Dendritic cell treated with granulocyte-macrophage colony-stimulating factor and Interleukin-4, amounts not matched to agents 40 ng/mL and 50 ng/mL, for 4 days (primary cell): ENCODE measurements at regions of chr1 and their contacts with region 1.

Region 1: GRCh38 chr1:43073490-43074230 is 98.4 kb downstream of the EBNA1BP2 start:
- H3K4me3 Mint-ChIP-seq: no peak overlapping the region
- H3K27ac Mint-ChIP-seq: no peak overlapping the region
- H3K4me1 Mint-ChIP-seq: peaks cover 16% of the 10 kb centered on the region
- H3K27me3 Mint-ChIP-seq: peaks cover 16% of the 10 kb centered on the region

Region 2: DNA sequence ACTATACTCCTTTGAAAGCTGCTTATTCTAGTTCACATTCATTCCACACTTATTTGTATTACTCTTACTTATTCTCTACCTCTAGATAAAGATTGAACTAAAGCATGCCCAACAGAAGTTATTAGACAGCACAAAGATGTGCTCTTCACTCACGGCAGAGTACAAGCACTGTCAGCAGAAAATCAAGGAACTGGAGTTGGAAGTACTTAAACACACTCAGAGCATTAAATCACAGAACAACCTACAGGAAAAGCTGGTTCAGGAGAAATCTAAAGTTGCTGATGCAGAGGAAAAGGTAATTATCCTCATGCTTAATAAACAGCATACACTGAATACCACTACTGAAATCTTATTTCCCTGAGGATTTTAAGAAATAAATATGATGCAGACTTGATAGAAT is 496.7 kb before region 1 on chr1:
- intact Hi-C with region 1: loop called (anchors 5 kb)
- H3K4me3 Mint-ChIP-seq: no peak overlapping the region
- H3K27ac Mint-ChIP-seq: no peak overlapping the region
- H3K4me1 Mint-ChIP-seq: no peaks in the 10 kb centered on the region
- H3K27me3 Mint-ChIP-seq: no peaks in the 10 kb centered on the region

Region 3: GRCh38 chr1:42777852-42778251 is 295.8 kb before region 1 on chr1:
- intact Hi-C with region 1: loop called (anchors 1 kb)
- H3K4me3 Mint-ChIP-seq: no peak overlapping the region
- H3K27ac Mint-ChIP-seq: no peak overlapping the region
- H3K4me1 Mint-ChIP-seq: peaks cover 10% of the 10 kb centered on the region
- H3K27me3 Mint-ChIP-seq: no peaks in the 10 kb centered on the region

Region 4: DNA sequence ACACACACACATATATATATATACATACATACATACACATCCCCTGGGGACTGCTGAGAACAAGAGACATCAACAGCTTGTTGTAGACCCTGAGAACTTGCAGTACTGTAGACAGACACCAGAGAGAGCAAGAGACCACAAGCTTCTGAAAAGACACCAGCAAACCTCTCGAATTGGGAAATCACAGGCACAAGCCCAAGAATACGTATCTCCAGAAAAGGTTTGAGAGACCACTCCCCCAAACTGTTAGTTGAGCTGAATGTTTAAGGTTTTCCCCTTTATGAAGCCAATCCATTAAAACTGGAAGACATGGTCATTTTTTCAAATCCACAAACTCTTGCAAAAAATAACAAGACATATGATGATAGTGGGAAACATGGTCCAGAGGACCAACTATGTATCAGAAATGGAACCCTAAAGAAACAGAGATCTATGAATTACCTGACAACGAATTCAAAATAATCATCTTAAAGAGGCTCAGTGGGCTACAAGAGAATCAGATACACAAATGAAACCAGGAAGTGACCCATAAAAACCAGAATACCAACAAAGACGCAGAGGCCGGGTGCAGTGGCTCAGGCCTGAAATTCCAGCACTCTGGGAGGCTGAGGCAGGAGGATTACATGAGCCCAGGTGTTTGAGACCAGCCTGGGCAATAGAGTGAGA is 160.1 kb before region 1 on chr1:
- intact Hi-C with region 1: loop called (anchors 1 kb)
- H3K4me3 Mint-ChIP-seq: no peak overlapping the region
- H3K27ac Mint-ChIP-seq: no peak overlapping the region
- H3K4me1 Mint-ChIP-seq: no peaks in the 10 kb centered on the region
- H3K27me3 Mint-ChIP-seq: peaks cover 4% of the 10 kb centered on the region